H1 (cell line): ENCODE measurements at regions of chr1 and their contacts with region 1.

Region 1: DNA sequence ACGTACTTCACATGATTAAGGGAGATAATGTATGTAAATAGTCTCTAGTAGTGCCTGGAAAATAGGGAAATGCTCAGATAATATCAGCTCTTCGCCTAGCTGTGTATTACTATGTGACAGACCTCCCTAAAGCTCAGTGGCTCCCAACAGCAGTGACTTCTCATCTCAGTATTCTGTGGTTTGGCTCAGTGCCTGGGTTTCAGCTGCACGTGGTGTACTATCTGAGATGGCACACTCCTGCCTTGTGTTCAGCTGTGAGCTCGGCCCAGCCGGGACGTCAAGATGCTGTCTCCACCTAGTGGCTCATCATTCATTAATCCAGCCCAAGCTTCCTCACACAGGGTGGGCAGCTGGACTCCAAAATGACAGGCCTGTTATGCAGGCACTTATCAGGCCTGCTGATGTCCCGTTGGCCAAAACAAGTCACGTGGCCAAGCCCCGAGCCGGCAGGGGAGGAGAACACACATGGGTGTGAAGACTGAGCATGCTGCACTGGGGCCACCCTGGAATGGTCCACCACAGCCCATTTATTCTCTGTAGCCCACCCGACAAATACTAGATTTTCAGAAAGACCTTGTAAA is 17.8 kb downstream of the SLFNL1 start:
- DNase-seq: no peak
- H3K4me3 ChIP-seq: no peak overlapping the region
- H3K27ac ChIP-seq: no peak overlapping the region
- H3K4me1 ChIP-seq: no peaks in the 10 kb centered on the region
- H3K27me3 ChIP-seq: no peaks in the 10 kb centered on the region
- CTCF ChIP-seq: peak; percentile 27 to 35 (median 28)
- EP300 ChIP-seq: no peak
- POLR2A ChIP-seq: no peak
- RAD21 ChIP-seq: peak; percentile 18 to 24; a peak in 2 of 4 replicates

Region 2: GRCh38 chr1:40919475-40920011 is 84.2 kb before region 1 on chr1:
- CTCF ChIA-PET with region 1: no interaction called
- POLR2A ChIA-PET with region 1: no interaction called
- DNase-seq: no peak
- H3K4me3 ChIP-seq: no peak overlapping the region
- H3K27ac ChIP-seq: no peak overlapping the region
- H3K4me1 ChIP-seq: 0 out of 7 replicates have a peak, but pooled peaks cover 0 to 5% (median 1%) of the 10 kb centered on the region in 4 experiments
- H3K27me3 ChIP-seq: no peaks in the 10 kb centered on the region
- CTCF ChIP-seq: no peak
- EP300 ChIP-seq: no peak
- POLR2A ChIP-seq: no peak
- RAD21 ChIP-seq: no peak

Region 3: GRCh38 chr1:41013796-41014195 is 10.1 kb after region 1 on chr1:
- CTCF ChIA-PET with region 1: interaction called, 4 read pairs
- POLR2A ChIA-PET with region 1: interaction called, 17 read pairs
- DNase-seq: no peak
- H3K4me3 ChIP-seq: no peak overlapping the region
- H3K27ac ChIP-seq: no peak overlapping the region
- H3K4me1 ChIP-seq: no peaks in the 10 kb centered on the region
- H3K27me3 ChIP-seq: no peaks in the 10 kb centered on the region
- CTCF ChIP-seq: no peak
- EP300 ChIP-seq: no peak
- POLR2A ChIP-seq: no peak
- RAD21 ChIP-seq: no peak

Region 4: GRCh38 chr1:41023279-41023990 is 19.7 kb after region 1 on chr1:
- CTCF ChIA-PET with region 1: interaction called, 5 read pairs
- POLR2A ChIA-PET with region 1: interaction called, 15 read pairs
- DNase-seq: no peak
- H3K4me3 ChIP-seq: no peak overlapping the region
- H3K27ac ChIP-seq: no peak overlapping the region
- H3K4me1 ChIP-seq: peaks cover 0 to 7% (median 4%) of the 10 kb centered on the region in 4 experiments; a peak in 4 of 7 replicates
- H3K27me3 ChIP-seq: peaks cover 0 to 13% (median 6%) of the 10 kb centered on the region in 4 experiments; a peak in 5 of 7 replicates
- CTCF ChIP-seq: peak; percentile 19 to 46 (median 43); a peak in 3 of 4 replicates
- EP300 ChIP-seq: no peak
- POLR2A ChIP-seq: no peak
- RAD21 ChIP-seq: peak; percentile 21 to 40; a peak in 3 of 4 replicates